Heart left ventricle (tissue), 16 donors: ENCODE measurements at regions of chr4 and their contacts with region 1.

Region 1: GRCh38 chr4:25180524-25181131 is 20.4 kb upstream of the SEPSECS start:
- DNase-seq: no peak
- ATAC-seq: peak in 3 of 4 donors; percentile 55 to 69 (median 62)
- H3K4me3 ChIP-seq: no peak overlapping the region
- H3K27ac ChIP-seq: no peak overlapping the region
- H3K4me1 ChIP-seq: no peaks in the 10 kb centered on the region
- H3K27me3 ChIP-seq: no peaks in the 10 kb centered on the region
- CTCF ChIP-seq: peak; percentile 28 to 64 (median 51)
- POLR2A ChIP-seq: no peak

Region 2: GRCh38 chr4:24303926-24304325 is 876.7 kb before region 1 on chr4:
- intact Hi-C with region 1: no loop called
- DNase-seq: no peak
- ATAC-seq: no peak
- H3K4me3 ChIP-seq: no peak overlapping the region
- H3K27ac ChIP-seq: no peak overlapping the region
- H3K4me1 ChIP-seq: no peaks in the 10 kb centered on the region
- H3K27me3 ChIP-seq: no peaks in the 10 kb centered on the region
- CTCF ChIP-seq: no peak
- POLR2A ChIP-seq: no peak

Region 3: GRCh38 chr4:25271866-25272265 is 91.2 kb after region 1 on chr4:
- intact Hi-C with region 1: no loop called
- DNase-seq: no peak
- ATAC-seq: no peak
- H3K4me3 ChIP-seq: no peak overlapping the region
- H3K27ac ChIP-seq: no peak overlapping the region
- H3K4me1 ChIP-seq: no peaks in the 10 kb centered on the region
- H3K27me3 ChIP-seq: no peaks in the 10 kb centered on the region
- CTCF ChIP-seq: no peak
- POLR2A ChIP-seq: no peak

Region 4: GRCh38 chr4:25299480-25300188 is 119.0 kb after region 1 on chr4:
- intact Hi-C with region 1: loop called in 1 of 10 experiments (anchors 10 kb)
- DNase-seq: no peak
- ATAC-seq: no peak
- H3K4me3 ChIP-seq: no peak overlapping the region
- H3K27ac ChIP-seq: no peak overlapping the region
- H3K4me1 ChIP-seq: no peaks in the 10 kb centered on the region
- H3K27me3 ChIP-seq: peaks cover 0 to 9% (median 0%) of the 10 kb centered on the region in 9 donors
- CTCF ChIP-seq: no peak
- POLR2A ChIP-seq: no peak

Region 5: DNA sequence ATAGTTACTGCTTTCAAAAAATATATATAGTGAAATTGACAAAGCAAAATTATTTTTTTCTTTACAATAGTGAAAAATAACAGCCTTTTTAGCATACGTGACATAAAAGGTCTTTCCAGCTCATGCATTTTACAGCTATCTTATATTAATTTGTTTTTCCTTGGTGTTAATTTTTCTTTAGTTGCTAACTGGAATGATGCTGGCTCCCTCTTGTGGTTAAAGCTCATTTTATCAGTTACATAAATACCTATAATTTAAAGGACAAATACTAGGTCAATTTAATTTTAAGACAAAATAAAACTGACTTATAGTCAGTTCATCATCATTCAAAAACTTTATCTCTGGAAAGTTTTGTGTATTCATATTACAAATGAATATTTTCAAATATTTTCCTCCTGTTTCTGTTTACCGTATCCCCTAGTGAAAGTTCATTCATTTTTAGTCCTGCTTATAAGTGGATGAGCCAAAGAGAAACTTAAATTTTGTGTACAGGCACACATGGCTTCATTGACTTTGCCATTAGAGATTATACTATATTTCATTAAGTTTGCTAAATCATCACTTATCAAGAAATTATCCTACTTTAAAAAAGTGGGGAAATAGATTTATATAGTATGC is 186.5 kb after region 1 on chr4:
- intact Hi-C with region 1: loop called in 6 of 10 experiments (anchors 5 to 10 kb)
- DNase-seq: no peak
- ATAC-seq: no peak
- H3K4me3 ChIP-seq: no peak overlapping the region
- H3K27ac ChIP-seq: no peak overlapping the region
- H3K4me1 ChIP-seq: no peaks in the 10 kb centered on the region
- H3K27me3 ChIP-seq: no peaks in the 10 kb centered on the region
- CTCF ChIP-seq: peak; percentile 30 to 73 (median 60)
- POLR2A ChIP-seq: no peak

Region 6: GRCh38 chr4:25727711-25728493 is 547.3 kb after region 1 on chr4:
- intact Hi-C with region 1: no loop called
- DNase-seq: no peak
- ATAC-seq: no peak
- H3K4me3 ChIP-seq: no peak overlapping the region
- H3K27ac ChIP-seq: no peak overlapping the region
- H3K4me1 ChIP-seq: peaks cover 0 to 5% (median 0%) of the 10 kb centered on the region in 12 donors
- H3K27me3 ChIP-seq: no peaks in the 10 kb centered on the region
- CTCF ChIP-seq: no peak
- POLR2A ChIP-seq: no peak